Activated CD4-positive, alpha-beta memory T cell treated with anti-CD3 and anti-CD28 coated beads for 36 hours (primary cell): ENCODE measurements at regions of chr4 and their contacts with region 1.

Region 1: GRCh38 chr4:25312496-25313200 is at the start of gene ZCCHC4:
- DNase-seq: peak; percentile 91
- H3K4me3 Mint-ChIP-seq: peak within 1 kb of the TSS; percentile 99
- H3K27ac Mint-ChIP-seq: peak within 1 kb of the TSS; percentile 90
- H3K4me1 Mint-ChIP-seq: peaks cover 19% of the 10 kb centered on the region
- H3K27me3 Mint-ChIP-seq: peaks cover 2% of the 10 kb centered on the region
- total RNA-seq, gene ZCCHC4: 10.6 to 11.5 TPM

Region 2: DNA sequence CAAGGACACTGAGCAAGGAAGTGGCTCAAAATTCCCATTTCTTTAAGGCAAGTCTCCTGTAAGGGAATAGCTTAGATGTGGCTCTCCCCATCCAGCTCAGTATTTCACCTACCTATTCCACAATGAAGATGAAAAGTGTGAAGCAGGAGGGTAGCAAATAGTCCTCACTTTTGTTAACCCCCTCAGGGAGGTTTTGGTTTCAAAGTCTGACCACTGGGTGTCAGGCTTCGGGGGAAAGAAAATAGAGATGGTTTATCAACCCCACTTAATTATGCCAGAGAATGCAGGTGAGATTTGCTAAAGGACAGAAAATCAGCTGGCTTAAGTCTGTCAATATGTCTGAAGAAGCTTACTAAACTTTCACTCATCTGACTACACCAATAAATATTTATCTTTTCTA is 797.8 kb before region 1 on chr4:
- CTCF ChIA-PET with region 1: no interaction called
- POLR2A ChIA-PET with region 1: no interaction called
- intact Hi-C with region 1: no loop called
- DNase-seq: no peak
- H3K4me3 Mint-ChIP-seq: no peak overlapping the region
- H3K27ac Mint-ChIP-seq: no peak overlapping the region
- H3K4me1 Mint-ChIP-seq: peaks cover 17% of the 10 kb centered on the region
- H3K27me3 Mint-ChIP-seq: no peaks in the 10 kb centered on the region

Region 3: GRCh38 chr4:25159884-25160713 is 152.5 kb before region 1 on chr4 and contains the start of gene SEPSECS:
- CTCF ChIA-PET with region 1: interaction called, 49 read pairs
- POLR2A ChIA-PET with region 1: interaction called, 8 read pairs
- intact Hi-C with region 1: loop called (anchors 1 kb)
- DNase-seq: peak; percentile 96
- H3K4me3 Mint-ChIP-seq: peak within 1 kb of the TSS; percentile 90
- H3K27ac Mint-ChIP-seq: peak within 1 kb of the TSS; percentile 99
- H3K4me1 Mint-ChIP-seq: peaks cover 39% of the 10 kb centered on the region
- H3K27me3 Mint-ChIP-seq: peaks cover 1% of the 10 kb centered on the region
- total RNA-seq, gene SEPSECS: 12.8 to 13.3 TPM

Region 4: GRCh38 chr4:25234390-25235370 is 78.0 kb before region 1 on chr4:
- CTCF ChIA-PET with region 1: interaction called, 57 read pairs
- POLR2A ChIA-PET with region 1: interaction called, 23 read pairs
- intact Hi-C with region 1: loop called (anchors 1 kb)
- DNase-seq: peak; percentile 59
- H3K4me3 Mint-ChIP-seq: peak overlapping the region; percentile 93
- H3K27ac Mint-ChIP-seq: peak overlapping the region; percentile 94
- H3K4me1 Mint-ChIP-seq: peaks cover 51% of the 10 kb centered on the region
- H3K27me3 Mint-ChIP-seq: no peaks in the 10 kb centered on the region

Region 5: DNA sequence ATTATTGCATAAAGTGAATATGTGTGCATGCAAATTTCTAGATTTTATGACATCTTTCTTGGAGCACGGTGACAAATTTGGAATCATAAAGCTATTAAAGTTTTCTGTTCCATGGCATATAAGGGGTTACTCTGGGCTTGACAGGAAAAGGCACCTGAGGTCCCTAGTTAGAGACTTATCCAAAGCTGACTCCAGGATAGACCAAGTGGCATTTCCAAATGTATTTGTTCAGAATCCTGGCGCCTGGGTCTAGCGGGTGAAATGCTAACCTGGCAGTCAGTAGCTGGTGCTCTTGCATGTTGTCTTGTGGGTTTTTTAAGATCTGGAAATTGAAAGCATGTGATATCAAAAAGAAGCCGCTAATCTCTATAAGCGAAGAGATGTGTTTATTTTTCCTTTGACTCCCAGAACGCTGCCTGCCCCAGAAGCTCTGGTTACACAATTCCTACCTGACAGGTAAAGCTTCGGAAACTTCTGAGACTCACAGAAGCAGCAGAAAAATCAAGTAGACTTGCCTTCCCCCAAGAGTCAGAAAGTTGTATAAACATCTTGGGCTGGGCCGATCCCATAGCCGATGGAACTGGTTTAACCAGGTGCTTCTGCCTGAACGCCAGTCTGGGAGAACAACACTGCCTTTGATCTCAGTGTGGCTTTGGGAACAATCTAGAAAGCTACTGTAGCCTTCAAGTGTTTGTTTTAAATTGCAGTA is 13.0 kb before region 1 on chr4:
- CTCF ChIA-PET with region 1: interaction called, 17 read pairs
- POLR2A ChIA-PET with region 1: no interaction called
- intact Hi-C with region 1: no loop called
- DNase-seq: no peak
- H3K4me3 Mint-ChIP-seq: no peak overlapping the region
- H3K27ac Mint-ChIP-seq: no peak overlapping the region
- H3K4me1 Mint-ChIP-seq: peaks cover 2% of the 10 kb centered on the region
- H3K27me3 Mint-ChIP-seq: peaks cover 6% of the 10 kb centered on the region

Region 6: DNA sequence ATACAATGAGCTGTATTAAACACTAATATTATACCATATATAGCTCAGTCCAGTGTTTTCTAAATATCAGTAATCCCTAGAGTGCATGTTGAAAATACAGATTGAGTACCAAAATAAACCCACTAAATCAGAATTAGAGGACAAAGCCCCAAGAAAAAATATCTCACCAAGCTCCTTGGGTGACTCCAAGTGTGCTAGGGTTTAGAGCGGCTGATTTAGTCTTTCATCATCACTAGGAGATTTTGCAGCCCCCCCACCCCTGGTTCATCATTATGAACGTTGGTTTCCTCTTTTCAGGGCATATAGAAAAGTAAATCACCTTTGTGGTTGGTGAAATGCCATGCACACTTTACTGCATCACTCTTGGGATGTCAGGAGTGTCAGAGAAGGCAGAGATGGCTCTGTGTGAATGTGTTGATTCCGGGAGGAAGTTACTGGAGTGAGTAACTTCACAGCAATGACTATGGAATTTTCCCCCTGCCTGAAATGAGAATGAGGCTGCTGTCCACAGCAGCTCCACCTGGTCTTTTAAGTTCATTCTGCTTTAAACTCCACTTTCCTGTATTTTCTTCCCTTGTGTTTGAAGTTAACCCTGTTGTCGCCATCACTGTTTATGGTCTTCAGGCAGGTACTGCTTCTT is 39.2 kb after region 1 on chr4:
- CTCF ChIA-PET with region 1: interaction called, 11 read pairs
- POLR2A ChIA-PET with region 1: no interaction called
- intact Hi-C with region 1: no loop called
- DNase-seq: no peak
- H3K4me3 Mint-ChIP-seq: no peak overlapping the region
- H3K27ac Mint-ChIP-seq: no peak overlapping the region
- H3K4me1 Mint-ChIP-seq: peaks cover under 1% of the 10 kb centered on the region
- H3K27me3 Mint-ChIP-seq: no peaks in the 10 kb centered on the region

Region 7: DNA sequence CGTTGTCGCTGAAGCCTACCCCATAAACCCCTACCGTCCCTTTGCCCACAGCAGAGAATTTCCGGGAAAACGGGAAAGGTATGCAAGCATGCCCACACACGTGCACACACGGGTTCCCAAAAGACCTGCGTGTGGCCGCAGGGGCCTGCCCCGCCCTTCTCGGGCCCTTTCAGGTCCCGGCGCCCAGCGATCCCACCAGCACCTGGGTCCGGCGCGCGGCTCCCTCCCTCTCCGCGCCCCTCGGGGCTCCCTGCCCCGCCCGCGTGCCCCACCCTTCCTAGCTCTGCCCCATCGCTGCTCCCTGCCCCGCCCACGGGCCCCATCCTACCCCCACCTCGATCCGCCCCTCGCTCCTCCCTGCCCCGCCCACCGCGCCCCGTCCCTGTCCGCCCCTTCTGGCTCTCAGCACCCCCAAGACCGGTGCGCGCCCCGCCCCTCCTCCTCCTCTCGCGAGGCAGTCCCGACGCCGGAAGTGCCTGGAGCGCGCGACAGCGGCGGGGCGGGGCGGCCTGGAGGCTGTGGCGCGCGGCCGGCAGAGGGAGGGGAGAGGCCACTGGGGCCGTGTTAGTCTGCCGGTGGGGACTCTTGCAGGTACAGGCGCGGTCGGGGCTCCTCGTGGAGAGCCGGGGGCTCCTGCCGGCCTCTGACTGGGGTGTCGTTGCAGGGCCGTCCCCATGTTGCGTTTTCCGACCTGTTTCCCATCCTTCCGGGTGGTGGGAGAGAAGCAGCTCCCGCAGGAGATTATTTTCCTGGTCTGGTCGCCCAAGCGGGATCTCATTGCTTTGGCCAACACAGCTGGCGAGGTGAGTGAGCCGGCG is 64.3 kb after region 1 on chr4 and contains the start of gene ANAPC4:
- CTCF ChIA-PET with region 1: interaction called, 34 read pairs
- POLR2A ChIA-PET with region 1: interaction called, 12 read pairs
- intact Hi-C with region 1: loop called (anchors 1 kb)
- DNase-seq: peak; percentile 98
- H3K4me3 Mint-ChIP-seq: no peak within 1 kb of the TSS
- H3K27ac Mint-ChIP-seq: peak within 1 kb of the TSS; percentile 72
- H3K4me1 Mint-ChIP-seq: peaks cover 6% of the 10 kb centered on the region
- H3K27me3 Mint-ChIP-seq: no peaks in the 10 kb centered on the region
- total RNA-seq, gene ANAPC4: 26.1 to 31.5 TPM